Activated CD8-positive, alpha-beta memory T cell treated with anti-CD3 and anti-CD28 coated beads, Interleukin-2, amount 10 ng/mL, durations not matched to agents 7 days and 5 days (primary cell): ENCODE measurements at regions of chr1 and their contacts with region 1.

Region 1: GRCh38 chr1:19113697-19114092 is 96.4 kb downstream of the UBR4 start:
- DNase-seq: peak; percentile 63
- ATAC-seq: peak; percentile 68
- H3K4me3 Mint-ChIP-seq: no peak overlapping the region
- H3K27ac Mint-ChIP-seq: no peak overlapping the region
- H3K4me1 Mint-ChIP-seq: no peaks in the 10 kb centered on the region
- H3K27me3 Mint-ChIP-seq: no peaks in the 10 kb centered on the region

Region 2: DNA sequence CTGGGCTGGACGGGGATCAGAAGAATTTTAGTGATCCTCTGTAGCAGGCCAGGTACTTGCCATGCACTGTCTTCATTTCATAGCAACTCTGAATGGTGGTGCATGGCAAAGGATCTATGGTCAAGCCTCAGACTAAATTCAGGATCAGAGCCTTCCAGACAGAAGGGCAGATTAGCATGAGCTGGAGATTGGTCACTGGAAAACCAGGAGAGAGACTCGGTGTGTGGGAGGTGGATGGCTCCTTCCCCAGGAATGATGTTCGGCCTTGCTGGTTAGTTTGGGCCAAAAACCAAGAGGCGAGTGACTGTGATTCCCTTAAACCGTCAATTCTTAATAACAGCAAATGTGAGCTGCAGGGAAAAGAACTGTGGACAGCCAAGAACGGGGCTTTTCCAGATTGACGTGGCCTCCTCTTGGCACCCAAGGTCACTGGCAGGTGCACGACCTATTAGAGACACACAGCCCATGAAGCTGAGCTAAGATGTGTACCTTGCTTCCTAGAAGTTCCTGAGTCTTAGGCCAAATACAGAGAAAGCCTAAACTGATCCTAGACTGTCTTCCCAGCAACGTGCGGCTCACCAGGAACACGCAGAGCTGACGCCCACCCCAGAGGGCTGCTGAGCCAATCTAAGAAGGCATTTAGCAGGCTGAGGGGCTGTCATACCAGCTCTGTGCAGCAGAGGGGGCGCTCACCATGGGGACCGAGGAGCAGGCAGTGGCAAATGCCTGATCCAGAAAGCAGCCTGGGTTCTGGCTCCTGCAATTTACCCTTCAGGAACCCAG is 229.9 kb before region 1 on chr1:
- CTCF ChIA-PET with region 1: interaction called, 18 read pairs
- DNase-seq: peak; percentile 78
- ATAC-seq: peak; percentile 69
- H3K4me3 Mint-ChIP-seq: no peak overlapping the region
- H3K27ac Mint-ChIP-seq: no peak overlapping the region
- H3K4me1 Mint-ChIP-seq: no peaks in the 10 kb centered on the region
- H3K27me3 Mint-ChIP-seq: no peaks in the 10 kb centered on the region

Region 3: GRCh38 chr1:19083081-19083480 is 30.6 kb before region 1 on chr1:
- CTCF ChIA-PET with region 1: no interaction called
- DNase-seq: no peak
- ATAC-seq: no peak
- H3K4me3 Mint-ChIP-seq: no peak overlapping the region
- H3K27ac Mint-ChIP-seq: no peak overlapping the region
- H3K4me1 Mint-ChIP-seq: peaks cover 6% of the 10 kb centered on the region
- H3K27me3 Mint-ChIP-seq: no peaks in the 10 kb centered on the region

Region 4: DNA sequence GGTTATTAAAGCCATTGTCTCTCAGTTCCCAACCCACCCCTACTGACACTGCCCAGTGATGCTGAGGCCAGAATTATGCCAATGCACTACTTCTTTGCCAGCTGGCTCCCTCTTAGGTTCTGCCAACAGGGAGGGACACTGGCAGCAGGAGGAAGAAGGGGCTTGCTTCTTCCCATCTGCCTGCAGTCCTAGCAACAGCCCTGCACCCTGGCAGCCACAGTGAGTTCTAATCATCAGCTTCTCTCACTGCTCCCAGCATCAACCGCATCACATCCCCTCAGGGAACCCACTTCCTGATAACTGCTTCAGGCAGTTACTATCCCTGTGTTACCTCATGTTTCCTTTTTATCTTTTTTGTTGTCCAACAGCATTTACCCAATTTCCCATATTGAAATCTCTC is 10.1 kb after region 1 on chr1:
- CTCF ChIA-PET with region 1: interaction called, 12 read pairs
- DNase-seq: no peak
- ATAC-seq: no peak
- H3K4me3 Mint-ChIP-seq: no peak overlapping the region
- H3K27ac Mint-ChIP-seq: no peak overlapping the region
- H3K4me1 Mint-ChIP-seq: peaks cover 16% of the 10 kb centered on the region
- H3K27me3 Mint-ChIP-seq: no peaks in the 10 kb centered on the region